Heart right ventricle (tissue), 16 donors: ENCODE measurements at regions of chr4 and their contacts with region 1.

Region 1: DNA sequence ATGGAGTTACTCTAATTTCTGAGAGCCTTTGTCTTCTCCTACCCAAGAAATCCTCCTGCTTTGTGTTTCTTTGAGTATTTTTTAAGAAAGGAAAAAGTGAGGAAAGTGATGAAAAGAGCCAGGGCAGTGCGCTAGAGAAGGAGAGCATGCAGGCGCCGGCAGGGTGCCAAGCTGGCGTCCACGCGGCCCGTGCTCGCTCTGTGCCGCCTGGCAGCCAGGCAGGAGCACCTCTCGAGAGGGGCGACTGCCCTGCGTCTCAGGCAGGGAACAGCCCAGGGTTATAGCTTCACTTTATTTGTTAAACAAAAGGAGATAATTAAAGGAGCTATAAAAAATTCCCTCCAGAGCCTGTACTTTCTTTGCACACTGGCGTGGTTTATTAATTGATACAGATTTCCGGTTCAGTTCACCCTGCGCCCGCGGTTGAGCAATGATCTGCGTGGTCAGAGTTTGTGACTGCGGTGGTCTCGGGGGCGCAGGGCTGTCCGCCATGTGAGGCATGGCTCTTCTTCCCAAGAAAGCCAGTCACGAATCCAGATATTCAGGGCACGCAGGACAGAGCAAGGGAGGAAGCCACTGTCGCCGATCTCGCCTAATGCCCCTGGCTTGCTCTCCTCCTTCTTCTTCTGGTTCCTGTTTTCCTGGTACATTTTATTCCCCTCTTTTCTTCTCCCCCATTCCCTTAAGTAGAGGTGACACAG is 110.8 kb upstream of the PAQR3 start:
- DNase-seq: no peak
- ATAC-seq: no peak
- H3K4me3 ChIP-seq: no peak overlapping the region
- H3K27ac ChIP-seq: no peak overlapping the region
- H3K4me1 ChIP-seq: peaks cover 0 to 16% (median 4%) of the 10 kb centered on the region in 9 donors
- H3K27me3 ChIP-seq: no peaks in the 10 kb centered on the region
- CTCF ChIP-seq: no peak

Region 2: DNA sequence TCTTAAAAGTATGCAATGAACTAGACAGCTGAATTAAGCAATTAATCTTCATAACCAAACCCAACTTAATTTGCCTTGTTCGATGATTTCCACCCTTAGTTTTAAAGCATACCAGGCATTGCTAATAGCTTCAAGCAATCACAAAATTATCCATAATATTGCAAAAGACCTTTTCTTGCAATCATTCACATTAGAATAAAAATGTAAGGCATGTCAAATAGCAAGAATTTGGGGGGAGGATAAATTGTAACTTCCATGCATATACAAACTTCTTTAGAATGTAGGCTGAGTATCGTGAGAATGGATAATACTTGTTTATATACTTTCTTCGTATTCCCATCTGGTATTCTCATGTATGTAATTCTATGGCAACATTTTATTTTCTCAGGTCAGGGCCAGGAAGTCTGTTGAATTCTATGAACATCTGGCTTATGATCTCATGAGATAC is 302.5 kb before region 1 on chr4:
- intact Hi-C with region 1: no loop called
- DNase-seq: no peak
- ATAC-seq: no peak
- H3K4me3 ChIP-seq: no peak overlapping the region
- H3K27ac ChIP-seq: no peak overlapping the region
- H3K4me1 ChIP-seq: peaks cover 0 to 33% (median 25%) of the 10 kb centered on the region in 9 donors
- H3K27me3 ChIP-seq: no peaks in the 10 kb centered on the region
- CTCF ChIP-seq: no peak

Region 3: DNA sequence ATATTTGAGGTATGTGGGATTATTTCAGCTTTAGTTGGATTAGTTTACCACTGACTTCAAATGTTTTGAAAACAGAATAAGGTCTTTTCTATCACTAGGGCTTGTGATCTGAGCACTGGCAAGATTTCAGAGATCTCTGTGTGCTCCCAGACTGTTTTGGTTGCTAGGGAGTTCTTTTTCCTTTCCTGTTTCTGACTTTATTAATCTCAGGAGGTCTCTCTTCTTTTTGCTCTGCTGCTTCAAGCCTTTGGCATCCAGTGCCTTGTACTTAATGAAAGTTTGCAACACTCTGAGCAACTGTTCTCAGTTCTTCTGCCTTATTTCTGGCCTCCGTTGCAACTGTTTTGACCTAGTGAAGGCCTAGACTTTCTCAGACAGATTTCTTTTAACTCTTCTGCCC is 78.7 kb before region 1 on chr4:
- intact Hi-C with region 1: no loop called
- DNase-seq: peak in 1 of 2 donors; percentile 14
- ATAC-seq: peak in 7 of 8 donors; percentile 64 to 96 (median 78)
- H3K4me3 ChIP-seq: no peak overlapping the region
- H3K27ac ChIP-seq: peak overlapping the region in 8 of 10 donors; percentile 12 to 65 (median 49)
- H3K4me1 ChIP-seq: peaks cover 0 to 12% (median 0%) of the 10 kb centered on the region in 9 donors
- H3K27me3 ChIP-seq: no peaks in the 10 kb centered on the region
- CTCF ChIP-seq: no peak

Region 4: DNA sequence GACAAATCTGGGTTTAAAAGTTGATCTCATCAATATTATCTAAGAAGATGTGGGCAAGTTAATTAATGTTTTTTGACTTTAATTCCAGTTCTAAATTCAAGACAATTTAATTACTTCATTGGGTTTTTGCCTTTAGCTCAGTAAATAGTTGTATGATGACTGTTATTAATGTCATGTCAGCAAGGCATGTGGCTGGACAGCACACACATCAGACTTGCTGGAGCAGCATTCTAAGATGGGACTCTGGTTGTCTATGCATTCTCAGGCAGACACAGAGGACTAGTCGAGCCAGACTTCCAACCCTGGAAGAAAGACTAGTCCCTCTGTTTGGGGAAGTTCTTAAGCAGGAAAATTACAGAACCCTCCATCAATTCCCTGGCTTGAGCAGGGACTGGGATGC is 538.7 kb after region 1 on chr4:
- intact Hi-C with region 1: loop called in 1 of 10 experiments (anchors 5 kb)
- DNase-seq: no peak
- ATAC-seq: no peak
- H3K4me3 ChIP-seq: no peak overlapping the region
- H3K27ac ChIP-seq: no peak overlapping the region
- H3K4me1 ChIP-seq: peaks cover 0 to 10% (median 4%) of the 10 kb centered on the region in 9 donors
- H3K27me3 ChIP-seq: no peaks in the 10 kb centered on the region
- CTCF ChIP-seq: no peak